ENCODE measurements at regions of chrX and their contacts with region 1.

Region 1: DNA sequence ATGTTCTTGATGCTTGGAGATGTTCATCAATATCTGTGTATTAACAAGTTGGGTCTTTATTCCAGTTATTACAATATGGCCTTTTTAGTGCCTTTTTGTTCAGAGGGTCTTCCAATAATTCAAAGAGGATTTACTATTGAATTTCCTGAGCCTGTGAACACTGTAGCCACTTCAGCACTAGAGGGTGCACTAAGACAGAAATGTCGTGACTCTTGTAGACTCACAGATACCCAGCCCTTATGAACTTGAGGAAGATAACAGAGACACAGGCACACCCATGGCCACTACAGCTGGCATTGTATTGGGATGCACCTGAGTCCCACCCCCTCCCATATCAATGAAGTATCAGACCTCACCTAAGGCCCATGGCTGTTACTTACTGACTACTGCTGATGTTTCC is 54.4 kb upstream of the ACTRT1 start:
- DNase-seq: no peak
- H3K4me3 ChIP-seq: no peak overlapping the region
- H3K27ac ChIP-seq: no peak overlapping the region
- H3K4me1 ChIP-seq: no peaks in the 10 kb centered on the region
- H3K27me3 ChIP-seq: no peaks in the 10 kb centered on the region
- CTCF ChIP-seq: peak; percentile 47 to 63

Region 2: GRCh38 chrX:128156204-128156603 is 49.6 kb after region 1 on chrX:
- CTCF ChIA-PET with region 1: no interaction called
- dilution Hi-C with region 1: no loop called
- in situ Hi-C with region 1: no loop called
- intact Hi-C with region 1: no loop called
- DNase-seq: no peak
- H3K4me3 ChIP-seq: no peak overlapping the region
- H3K27ac ChIP-seq: no peak overlapping the region
- H3K4me1 ChIP-seq: no peaks in the 10 kb centered on the region
- H3K27me3 ChIP-seq: no peaks in the 10 kb centered on the region
- CTCF ChIP-seq: no peak

Region 3: DNA sequence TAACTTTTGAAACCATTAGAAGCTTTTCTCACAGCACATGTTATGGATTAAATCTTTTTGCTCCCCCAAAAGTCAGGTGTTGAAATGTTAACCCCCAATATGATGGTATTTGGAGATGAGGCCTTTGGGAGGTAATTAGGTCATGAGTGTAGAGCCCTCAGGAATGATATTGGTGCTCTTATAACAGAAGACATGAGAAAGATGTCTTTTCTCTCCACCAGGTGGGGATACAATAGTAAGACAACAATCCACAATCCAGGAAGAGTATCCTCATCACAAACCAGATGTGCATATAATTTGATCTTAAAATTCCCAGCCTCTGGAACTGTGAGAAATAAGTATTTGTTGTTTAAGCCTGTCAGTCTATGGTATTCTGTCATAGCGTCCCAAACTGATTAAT is 144.9 kb after region 1 on chrX:
- CTCF ChIA-PET with region 1: no interaction called
- dilution Hi-C with region 1: no loop called
- in situ Hi-C with region 1: no loop called
- intact Hi-C with region 1: loop called (anchors 5 kb)
- DNase-seq: no peak
- H3K4me3 ChIP-seq: no peak overlapping the region
- H3K27ac ChIP-seq: no peak overlapping the region
- H3K4me1 ChIP-seq: no peaks in the 10 kb centered on the region
- H3K27me3 ChIP-seq: no peaks in the 10 kb centered on the region
- CTCF ChIP-seq: peak in 1 of 2 donors; percentile 45

Region 4: GRCh38 chrX:128518508-128518907 is 411.9 kb after region 1 on chrX:
- CTCF ChIA-PET with region 1: no interaction called
- dilution Hi-C with region 1: no loop called
- in situ Hi-C with region 1: loop called in 1 of 2 experiments (anchors 25 kb)
- intact Hi-C with region 1: loop called (anchors 1 kb)
- DNase-seq: peak; percentile 7
- H3K4me3 ChIP-seq: no peak overlapping the region
- H3K27ac ChIP-seq: no peak overlapping the region
- H3K4me1 ChIP-seq: no peaks in the 10 kb centered on the region
- H3K27me3 ChIP-seq: no peaks in the 10 kb centered on the region
- CTCF ChIP-seq: peak; percentile 53 to 79

Region 5: GRCh38 chrX:128781493-128781892 is 674.9 kb after region 1 on chrX:
- CTCF ChIA-PET with region 1: no interaction called
- dilution Hi-C with region 1: no loop called
- in situ Hi-C with region 1: no loop called
- intact Hi-C with region 1: loop called (anchors 2 kb)
- DNase-seq: no peak
- H3K4me3 ChIP-seq: no peak overlapping the region
- H3K27ac ChIP-seq: no peak overlapping the region
- H3K4me1 ChIP-seq: no peaks in the 10 kb centered on the region
- H3K27me3 ChIP-seq: no peaks in the 10 kb centered on the region
- CTCF ChIP-seq: peak; percentile 2 to 32

Region 6: DNA sequence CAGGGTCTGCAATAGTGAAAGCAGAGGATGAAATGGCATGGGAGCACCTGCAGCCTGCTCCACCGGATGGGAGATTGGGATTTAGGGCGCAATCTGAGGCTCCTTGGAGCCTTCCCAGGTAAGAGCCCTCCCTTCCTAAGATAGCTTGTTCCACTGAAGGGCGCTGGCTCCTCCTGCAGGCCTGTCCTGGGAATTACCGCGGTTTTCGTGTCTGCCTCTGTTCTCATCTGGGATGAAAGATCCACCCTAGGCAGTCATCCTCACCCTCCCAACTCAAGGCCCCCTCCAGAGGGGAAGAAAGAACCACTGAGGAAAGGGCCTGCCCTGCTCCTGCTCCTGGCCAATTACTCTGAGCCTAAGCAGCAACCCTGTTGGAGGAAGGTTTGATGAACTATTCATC is 869.1 kb after region 1 on chrX:
- CTCF ChIA-PET with region 1: no interaction called
- dilution Hi-C with region 1: no loop called
- in situ Hi-C with region 1: no loop called
- intact Hi-C with region 1: loop called (anchors 1 kb)
- DNase-seq: peak; percentile 0
- H3K4me3 ChIP-seq: no peak overlapping the region
- H3K27ac ChIP-seq: no peak overlapping the region
- H3K4me1 ChIP-seq: no peaks in the 10 kb centered on the region
- H3K27me3 ChIP-seq: no peaks in the 10 kb centered on the region
- CTCF ChIP-seq: peak; percentile 60 to 71